ENCODE measurements at regions of chr9 and their contacts with region 1.

Region 1: DNA sequence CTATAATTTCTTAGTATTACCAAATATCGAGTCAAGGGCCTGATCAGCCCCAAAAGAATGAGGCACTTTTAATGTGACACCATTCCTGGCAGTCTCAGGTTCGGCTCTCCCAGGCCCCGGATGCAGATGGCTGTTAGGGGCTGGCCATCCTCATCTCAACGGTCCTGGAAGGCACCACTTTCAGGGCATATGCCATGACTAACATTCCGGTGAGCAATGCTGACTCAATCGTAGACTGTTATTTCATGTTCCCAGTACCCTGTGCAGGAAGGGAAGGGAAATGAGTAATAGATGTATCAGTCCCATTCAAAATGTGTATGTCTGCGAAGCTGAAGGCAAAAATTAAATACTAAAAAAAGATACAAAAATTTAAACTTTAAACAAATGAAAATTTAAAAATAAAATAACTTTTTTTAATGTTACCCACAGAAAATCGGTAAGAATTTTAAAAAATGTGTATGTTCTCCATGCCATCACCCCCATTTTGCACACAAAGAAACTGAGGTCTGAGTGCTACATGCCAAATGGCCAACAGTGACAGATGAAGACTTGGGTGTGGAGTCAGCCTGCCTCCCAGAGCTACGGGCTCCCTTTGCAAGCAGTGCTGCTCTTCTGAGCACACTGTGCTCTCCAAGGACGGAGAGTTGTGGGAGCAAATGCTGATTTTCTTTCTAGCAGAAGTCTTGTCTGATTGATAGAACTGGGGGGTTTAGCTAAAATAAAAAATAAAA is 79.0 kb downstream of the GLDC start:
- DNase-seq: no peak
- H3K4me3 ChIP-seq: no peak overlapping the region
- H3K27ac ChIP-seq: peak overlapping the region; percentile 39 to 78 (median 54)
- H3K4me1 ChIP-seq: peaks cover 5 to 33% (median 22%) of the 10 kb centered on the region in 3 donors
- H3K27me3 ChIP-seq: no peaks in the 10 kb centered on the region
- CTCF ChIP-seq: no peak
- POLR2A ChIP-seq: no peak

Region 2: GRCh38 chr9:6029604-6030274 is 536.8 kb before region 1 on chr9:
- intact Hi-C with region 1: no loop called
- DNase-seq: no peak
- H3K4me3 ChIP-seq: no peak overlapping the region
- H3K27ac ChIP-seq: no peak overlapping the region
- H3K4me1 ChIP-seq: no peaks in the 10 kb centered on the region
- H3K27me3 ChIP-seq: peaks cover 0 to 15% (median 0%) of the 10 kb centered on the region in 4 donors
- CTCF ChIP-seq: no peak
- POLR2A ChIP-seq: no peak

Region 3: DNA sequence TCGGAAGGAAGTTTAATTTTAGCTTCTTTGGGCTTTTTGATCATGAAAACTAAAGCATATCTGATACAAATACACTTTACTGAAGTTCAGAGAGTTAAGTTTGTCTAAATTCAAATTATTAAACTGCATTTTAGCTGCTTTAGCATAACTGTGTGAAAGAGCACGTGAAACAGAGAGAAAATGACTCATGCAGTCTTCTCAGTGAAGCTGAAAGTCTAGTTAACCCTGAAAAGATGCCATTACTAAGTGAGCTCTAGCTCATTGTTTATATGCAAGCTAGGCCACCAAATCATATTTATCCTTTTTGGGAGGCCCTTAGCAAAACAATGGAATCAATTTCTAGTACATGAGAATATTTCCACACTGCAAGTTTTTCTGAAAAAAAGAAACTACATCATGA is 210.8 kb before region 1 on chr9:
- intact Hi-C with region 1: loop called (anchors 5 kb)
- DNase-seq: no peak
- H3K4me3 ChIP-seq: no peak overlapping the region
- H3K27ac ChIP-seq: no peak overlapping the region
- H3K4me1 ChIP-seq: peaks cover 0 to 4% (median 0%) of the 10 kb centered on the region in 3 donors
- H3K27me3 ChIP-seq: no peaks in the 10 kb centered on the region
- CTCF ChIP-seq: no peak
- POLR2A ChIP-seq: no peak

Region 4: GRCh38 chr9:6495466-6495865 is 71.1 kb before region 1 on chr9:
- intact Hi-C with region 1: no loop called
- DNase-seq: no peak
- H3K4me3 ChIP-seq: no peak overlapping the region
- H3K27ac ChIP-seq: no peak overlapping the region
- H3K4me1 ChIP-seq: no peaks in the 10 kb centered on the region
- H3K27me3 ChIP-seq: no peaks in the 10 kb centered on the region
- CTCF ChIP-seq: no peak
- POLR2A ChIP-seq: no peak

Measured in esophagus squamous epithelium (tissue), 5 donors.